Right cardiac atrium (tissue), 5 donors: ENCODE measurements at regions of chr22 and their contacts with region 1.

Region 1: DNA sequence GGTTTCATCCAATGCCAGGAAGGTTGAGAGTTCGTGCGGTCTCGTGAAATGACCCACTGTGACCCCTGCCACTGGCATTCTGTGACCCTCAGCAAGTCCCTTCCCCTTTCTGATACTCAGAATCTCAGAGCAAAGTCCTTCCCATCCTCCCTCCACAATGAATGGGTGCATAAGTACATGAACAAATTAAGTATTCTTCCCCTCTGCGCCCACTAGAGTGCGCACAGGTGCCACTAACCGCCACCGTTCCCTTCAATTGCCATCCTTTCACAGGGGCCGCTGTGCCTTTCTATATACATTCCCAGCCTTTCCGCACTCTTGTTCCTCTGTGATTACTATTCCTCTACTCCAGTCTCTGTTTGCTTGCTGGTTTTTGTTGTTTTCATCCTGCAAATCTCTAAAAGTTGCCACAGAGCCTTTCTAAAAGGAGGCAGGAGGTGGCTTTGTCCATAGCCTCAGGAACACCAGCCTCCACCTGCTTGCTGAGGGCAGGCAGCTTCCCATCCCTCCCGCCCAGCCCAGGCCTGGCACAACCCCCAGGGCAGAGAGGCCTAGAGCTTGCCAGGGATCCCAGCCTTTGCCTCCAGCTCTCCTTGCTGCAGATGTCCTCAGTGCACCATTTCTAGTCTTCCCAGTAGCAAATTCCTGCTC is 6.7 kb upstream of the AP1B1 start:
- DNase-seq: peak; percentile 65 to 81 (median 79)
- ATAC-seq: peak; percentile 80 to 84
- H3K4me3 ChIP-seq: no peak overlapping the region
- H3K27ac ChIP-seq: no peak overlapping the region
- H3K4me1 ChIP-seq: no peaks in the 10 kb centered on the region
- H3K27me3 ChIP-seq: no peaks in the 10 kb centered on the region

Region 2: DNA sequence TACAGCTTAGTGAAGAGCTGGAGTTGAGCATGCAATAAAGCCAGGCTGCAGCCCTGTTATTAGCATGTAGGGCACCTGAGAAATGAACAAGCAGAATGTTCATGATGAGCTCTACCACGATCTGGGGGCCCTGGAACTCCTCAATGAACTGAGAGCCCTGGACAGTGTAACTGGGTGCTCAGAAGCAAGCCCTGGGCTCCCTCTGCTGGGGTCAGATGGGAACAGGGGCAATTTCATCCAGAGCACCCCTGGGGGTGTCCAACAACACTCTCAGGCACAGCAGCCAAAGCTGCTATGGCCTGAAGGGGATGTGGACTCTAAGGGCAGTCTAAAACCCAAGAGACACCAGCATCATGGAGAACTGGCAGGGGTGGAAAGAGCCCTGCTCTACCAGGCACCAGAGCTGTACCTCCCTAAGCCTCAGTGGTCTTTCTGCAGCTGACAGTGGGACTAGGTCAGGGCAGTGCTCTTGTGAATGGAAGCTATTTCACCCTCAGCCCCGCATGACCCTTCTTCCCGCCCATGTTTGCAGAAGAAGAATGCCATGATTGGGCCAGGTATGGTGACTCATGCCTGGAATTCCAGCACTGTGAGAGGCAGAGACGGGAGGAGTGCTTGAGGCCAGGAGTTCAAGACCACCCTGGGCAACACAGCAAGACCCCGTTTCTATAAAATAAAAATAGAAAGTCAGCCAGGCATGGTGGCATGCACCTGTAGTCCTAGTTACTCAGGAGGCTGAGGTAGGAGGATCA is 129.6 kb after region 1 on chr22:
- intact Hi-C with region 1: loop called in 2 of 4 experiments (anchors 10 kb)
- DNase-seq: peak in 2 of 3 donors; percentile 22 to 56
- ATAC-seq: peak in 1 of 2 donors; percentile 54
- H3K4me3 ChIP-seq: no peak overlapping the region
- H3K27ac ChIP-seq: no peak overlapping the region
- H3K4me1 ChIP-seq: no peaks in the 10 kb centered on the region
- H3K27me3 ChIP-seq: no peaks in the 10 kb centered on the region

Region 3: GRCh38 chr22:29621761-29622526 is 226.9 kb after region 1 on chr22:
- intact Hi-C with region 1: no loop called
- DNase-seq: no peak
- ATAC-seq: no peak
- H3K4me3 ChIP-seq: no peak overlapping the region
- H3K27ac ChIP-seq: no peak overlapping the region
- H3K4me1 ChIP-seq: peaks cover 4% of the 10 kb centered on the region
- H3K27me3 ChIP-seq: no peaks in the 10 kb centered on the region